CD8-positive, alpha-beta T cell (primary cell): ENCODE measurements at regions of chr9 and their contacts with region 1.

Region 1: DNA sequence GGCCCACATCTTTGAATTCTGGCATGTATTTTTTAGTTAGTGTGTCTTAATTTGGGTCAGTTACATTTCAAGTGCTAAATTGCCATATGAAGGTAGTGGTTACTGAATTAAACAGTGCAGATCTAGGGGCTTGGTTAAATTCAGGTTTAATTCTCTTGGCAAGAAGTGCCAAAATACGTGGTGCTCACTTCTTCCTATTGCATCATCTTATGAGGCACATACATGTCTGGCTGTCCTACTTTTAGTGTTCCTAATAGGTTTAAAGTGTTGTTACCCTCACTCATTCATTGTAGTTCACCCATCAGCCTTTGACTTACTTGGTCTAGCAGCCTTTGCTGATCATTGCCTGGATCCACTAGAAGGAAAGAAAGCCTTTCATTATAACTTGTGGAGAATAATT is 59.5 kb downstream of the RPS6 start:
- DNase-seq: no peak
- ATAC-seq: no peak
- H3K4me3 ChIP-seq: no peak overlapping the region
- H3K4me3 Mint-ChIP-seq: no peak overlapping the region
- H3K27ac ChIP-seq: no peak overlapping the region
- H3K27ac Mint-ChIP-seq: no peak overlapping the region
- H3K4me1 ChIP-seq: no peaks in the 10 kb centered on the region
- H3K4me1 Mint-ChIP-seq: peaks cover 5% of the 10 kb centered on the region
- H3K27me3 ChIP-seq: no peaks in the 10 kb centered on the region
- H3K27me3 Mint-ChIP-seq: no peaks in the 10 kb centered on the region
- CTCF ChIP-seq: no peak

Region 2: GRCh38 chr9:19127881-19128500 is 192.5 kb before region 1 on chr9:
- CTCF ChIA-PET with region 1: no interaction called
- POLR2A ChIA-PET with region 1: no interaction called
- intact Hi-C with region 1: no loop called
- DNase-seq: peak in 7 of 9 experiments; percentile 7 to 68 (median 46)
- ATAC-seq: peak; percentile 19
- H3K4me3 ChIP-seq: peak overlapping the region; percentile 62 to 70
- H3K4me3 Mint-ChIP-seq: peak overlapping the region; percentile 93
- H3K27ac ChIP-seq: peak overlapping the region; percentile 83 to 91
- H3K27ac Mint-ChIP-seq: peak overlapping the region; percentile 94
- H3K4me1 ChIP-seq: peaks cover 48% of the 10 kb centered on the region
- H3K4me1 Mint-ChIP-seq: peaks cover 53% of the 10 kb centered on the region
- H3K27me3 ChIP-seq: no peaks in the 10 kb centered on the region
- H3K27me3 Mint-ChIP-seq: no peaks in the 10 kb centered on the region
- CTCF ChIP-seq: no peak

Region 3: DNA sequence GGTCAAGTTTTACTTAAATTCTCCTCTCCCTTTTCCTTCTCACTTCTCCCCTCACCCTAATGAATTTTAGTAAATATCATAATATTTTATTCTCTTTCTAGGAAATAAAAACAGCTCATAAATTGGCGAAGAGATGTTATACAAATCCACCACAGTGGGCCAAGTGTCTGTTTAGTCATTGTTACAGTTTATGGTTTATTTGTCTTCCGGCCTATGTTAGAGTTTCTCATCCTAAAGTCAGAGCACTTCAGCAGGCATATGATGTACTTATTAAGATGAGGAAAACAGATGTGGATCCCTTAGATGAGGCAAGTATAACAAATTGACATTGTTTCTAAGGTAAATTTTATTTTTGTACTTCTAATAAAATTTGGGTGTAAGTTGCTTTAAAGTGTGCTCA is 11.4 kb after region 1 on chr9:
- CTCF ChIA-PET with region 1: no interaction called
- POLR2A ChIA-PET with region 1: no interaction called
- intact Hi-C with region 1: loop called in 1 of 2 experiments (anchors 2 kb)
- DNase-seq: no peak
- ATAC-seq: no peak
- H3K4me3 ChIP-seq: no peak overlapping the region
- H3K4me3 Mint-ChIP-seq: no peak overlapping the region
- H3K27ac ChIP-seq: no peak overlapping the region
- H3K27ac Mint-ChIP-seq: no peak overlapping the region
- H3K4me1 ChIP-seq: no peaks in the 10 kb centered on the region
- H3K4me1 Mint-ChIP-seq: no peaks in the 10 kb centered on the region
- H3K27me3 ChIP-seq: no peaks in the 10 kb centered on the region
- H3K27me3 Mint-ChIP-seq: no peaks in the 10 kb centered on the region
- CTCF ChIP-seq: no peak

Region 4: GRCh38 chr9:19371942-19372341 is 51.4 kb after region 1 on chr9:
- CTCF ChIA-PET with region 1: no interaction called
- POLR2A ChIA-PET with region 1: no interaction called
- intact Hi-C with region 1: loop called in 1 of 2 experiments (anchors 5 kb)
- DNase-seq: no peak
- ATAC-seq: no peak
- H3K4me3 ChIP-seq: no peak overlapping the region
- H3K4me3 Mint-ChIP-seq: no peak overlapping the region
- H3K27ac ChIP-seq: no peak overlapping the region
- H3K27ac Mint-ChIP-seq: no peak overlapping the region
- H3K4me1 ChIP-seq: peaks cover under 1% of the 10 kb centered on the region
- H3K4me1 Mint-ChIP-seq: peaks cover 5% of the 10 kb centered on the region
- H3K27me3 ChIP-seq: no peaks in the 10 kb centered on the region
- H3K27me3 Mint-ChIP-seq: no peaks in the 10 kb centered on the region
- CTCF ChIP-seq: no peak